ENCODE measurements at regions of chrX and their contacts with region 1.

Region 1: DNA sequence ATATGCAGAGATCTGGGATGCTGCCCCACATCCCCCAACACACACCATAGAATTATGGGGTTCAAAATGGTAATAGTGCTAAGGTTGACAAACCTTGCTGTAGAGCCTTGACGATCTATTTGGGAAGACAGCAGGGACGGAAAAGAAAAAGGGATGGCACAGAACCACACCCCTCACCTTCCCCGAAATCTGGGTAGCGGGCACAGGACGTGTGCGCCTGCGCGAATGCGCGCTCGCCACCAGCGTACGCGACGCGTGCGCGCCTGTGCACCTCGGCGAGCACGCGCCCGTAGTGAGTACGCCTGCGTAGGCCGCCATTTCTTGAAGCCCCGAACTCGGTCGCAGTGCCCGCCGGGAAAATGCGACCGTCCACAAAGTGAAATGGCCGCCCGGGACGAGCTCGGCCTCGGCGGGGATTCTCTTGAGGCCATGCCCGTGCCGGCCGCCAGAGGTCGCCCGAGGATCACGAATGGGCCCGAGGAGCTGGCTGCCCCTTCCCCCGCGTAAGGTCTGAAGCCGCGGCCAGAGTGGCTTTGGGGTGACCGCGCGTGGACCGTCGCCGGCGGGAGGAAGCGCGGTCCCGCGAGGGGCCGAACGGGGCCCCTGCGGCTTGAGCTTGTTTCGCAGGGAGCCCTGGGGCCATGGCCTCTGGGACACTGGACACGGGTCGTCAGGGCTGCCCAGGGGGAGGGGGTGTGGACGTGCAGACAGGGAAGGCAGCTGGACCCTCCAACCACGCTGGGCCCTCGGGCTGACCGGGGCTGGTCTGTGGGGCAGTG is 43.6 kb downstream of the ZNF185 start:
- DNase-seq: peak; percentile 84
- ATAC-seq: peak; percentile 96
- H3K4me3 Mint-ChIP-seq: peak overlapping the region; percentile 87
- H3K27ac Mint-ChIP-seq: peak overlapping the region; percentile 83
- H3K4me1 Mint-ChIP-seq: peaks cover 9% of the 10 kb centered on the region
- H3K27me3 Mint-ChIP-seq: no peaks in the 10 kb centered on the region
- CTCF ChIP-seq: no peak

Region 2: GRCh38 chrX:151722241-151722846 is 1219.2 kb before region 1 on chrX:
- CTCF ChIA-PET with region 1: no interaction called
- POLR2A ChIA-PET with region 1: no interaction called
- intact Hi-C with region 1: no loop called
- DNase-seq: no peak
- ATAC-seq: no peak
- H3K4me3 Mint-ChIP-seq: no peak overlapping the region
- H3K27ac Mint-ChIP-seq: no peak overlapping the region
- H3K4me1 Mint-ChIP-seq: no peaks in the 10 kb centered on the region
- H3K27me3 Mint-ChIP-seq: no peaks in the 10 kb centered on the region
- CTCF ChIP-seq: no peak

Region 3: DNA sequence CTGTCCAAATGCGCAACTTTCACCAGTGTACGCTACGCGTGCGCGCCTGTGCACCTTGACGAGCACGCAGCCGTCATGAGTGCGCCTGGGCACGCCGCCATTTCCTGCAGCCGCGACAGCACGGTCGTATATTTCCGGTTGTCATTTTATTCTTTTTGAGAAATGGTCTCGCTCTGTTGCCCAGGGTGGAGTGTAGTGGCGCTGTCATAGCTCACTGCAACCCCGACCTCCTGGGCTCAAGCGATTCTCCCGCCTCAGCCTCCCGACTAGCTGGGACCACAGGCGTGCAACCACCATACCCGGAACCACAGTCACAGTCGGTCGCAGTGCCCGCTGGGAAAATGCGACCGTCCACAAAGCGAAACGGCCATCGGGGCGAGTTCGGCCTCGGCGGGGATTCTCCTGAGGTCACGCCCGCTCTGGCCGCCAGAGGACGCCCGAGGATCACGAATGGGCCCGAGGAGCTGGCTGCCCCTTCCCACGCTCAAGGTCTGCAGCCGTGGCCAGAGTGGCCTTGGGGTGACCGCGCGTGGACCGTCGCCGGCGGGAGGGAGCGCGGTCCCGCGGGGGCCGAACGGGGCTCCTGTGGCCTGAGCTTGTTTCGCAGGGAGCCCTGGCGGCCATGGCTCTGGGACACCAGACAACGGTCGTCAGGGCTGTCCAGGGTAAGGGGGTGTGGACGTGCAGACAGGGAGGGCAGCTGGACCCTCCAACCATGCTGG is 91.0 kb after region 1 on chrX:
- CTCF ChIA-PET with region 1: interaction called, 8 read pairs
- POLR2A ChIA-PET with region 1: interaction called, 3 read pairs
- intact Hi-C with region 1: loop called (anchors 5 kb)
- DNase-seq: peak; percentile 70
- ATAC-seq: peak; percentile 87
- H3K4me3 Mint-ChIP-seq: peak overlapping the region; percentile 89
- H3K27ac Mint-ChIP-seq: peak overlapping the region; percentile 92
- H3K4me1 Mint-ChIP-seq: peaks cover 2% of the 10 kb centered on the region
- H3K27me3 Mint-ChIP-seq: no peaks in the 10 kb centered on the region
- CTCF ChIP-seq: no peak

Region 4: GRCh38 chrX:153361781-153362397 is 420.4 kb after region 1 on chrX:
- CTCF ChIA-PET with region 1: no interaction called
- POLR2A ChIA-PET with region 1: no interaction called
- intact Hi-C with region 1: no loop called
- DNase-seq: no peak
- ATAC-seq: no peak
- H3K4me3 Mint-ChIP-seq: no peak overlapping the region
- H3K27ac Mint-ChIP-seq: no peak overlapping the region
- H3K4me1 Mint-ChIP-seq: no peaks in the 10 kb centered on the region
- H3K27me3 Mint-ChIP-seq: no peaks in the 10 kb centered on the region
- CTCF ChIP-seq: no peak

Region 5: DNA sequence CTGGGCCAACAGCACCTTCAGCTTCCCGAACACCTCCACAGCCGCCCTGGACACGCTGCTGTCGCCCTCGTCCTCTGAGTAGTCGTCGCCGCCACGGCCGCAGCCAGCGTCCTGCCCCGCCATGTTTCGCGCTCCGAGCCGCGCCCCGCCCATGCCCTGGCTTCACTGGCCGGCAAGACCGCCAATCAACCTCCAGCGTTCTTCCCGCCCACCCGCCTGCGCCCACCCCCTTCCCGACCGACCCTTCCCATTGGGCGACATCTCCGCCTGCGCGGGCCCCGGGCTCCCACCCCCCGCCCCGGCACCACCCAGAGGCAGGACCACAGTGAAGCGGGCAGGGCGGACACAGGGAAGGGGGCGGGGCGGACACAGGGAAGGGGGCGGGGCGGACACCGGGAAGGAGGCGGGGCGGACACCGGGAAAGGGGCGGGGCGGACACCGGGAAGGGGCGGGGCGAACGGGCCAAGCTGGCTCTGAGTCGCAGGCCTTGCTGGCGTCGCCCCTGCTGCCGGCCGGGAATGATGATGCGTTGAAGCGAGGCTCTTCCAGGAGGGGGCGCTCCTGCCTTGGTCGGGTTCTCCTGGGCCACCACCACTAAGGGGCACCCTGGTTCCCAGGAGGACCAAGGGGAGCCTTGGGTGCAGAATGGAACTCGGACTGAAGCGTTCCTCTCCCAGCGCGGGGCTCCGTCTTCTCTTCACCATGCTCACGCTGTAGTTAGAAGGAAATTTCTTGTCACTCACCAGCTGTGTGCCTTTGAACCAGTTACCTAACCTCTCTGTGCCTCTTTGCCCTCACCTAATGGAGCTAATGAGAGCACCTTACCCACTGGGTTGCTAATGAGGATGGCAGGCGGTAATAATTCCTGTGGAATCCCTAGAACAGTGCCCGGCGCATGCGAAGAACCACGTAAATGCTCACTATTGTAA is 529.2 kb after region 1 on chrX and contains the start of gene HAUS7:
- CTCF ChIA-PET with region 1: no interaction called
- POLR2A ChIA-PET with region 1: no interaction called
- intact Hi-C with region 1: loop called (anchors 1 kb)
- DNase-seq: peak; percentile 69
- ATAC-seq: peak; percentile 88
- H3K4me3 Mint-ChIP-seq: peak within 1 kb of the TSS; percentile 83
- H3K27ac Mint-ChIP-seq: peak within 1 kb of the TSS; percentile 66
- H3K4me1 Mint-ChIP-seq: peaks cover 16% of the 10 kb centered on the region
- H3K27me3 Mint-ChIP-seq: no peaks in the 10 kb centered on the region
- CTCF ChIP-seq: no peak
- total RNA-seq, gene HAUS7: 39.2 and 42.7 TPM in 2 replicates

Region 6: GRCh38 chrX:153539171-153539978 is 597.9 kb after region 1 on chrX:
- CTCF ChIA-PET with region 1: interaction called, 15 read pairs
- POLR2A ChIA-PET with region 1: no interaction called
- intact Hi-C with region 1: no loop called
- DNase-seq: peak; percentile 42
- ATAC-seq: peak; percentile 94
- H3K4me3 Mint-ChIP-seq: no peak overlapping the region
- H3K27ac Mint-ChIP-seq: no peak overlapping the region
- H3K4me1 Mint-ChIP-seq: no peaks in the 10 kb centered on the region
- H3K27me3 Mint-ChIP-seq: peaks cover 3% of the 10 kb centered on the region
- CTCF ChIP-seq: no peak

Region 7: DNA sequence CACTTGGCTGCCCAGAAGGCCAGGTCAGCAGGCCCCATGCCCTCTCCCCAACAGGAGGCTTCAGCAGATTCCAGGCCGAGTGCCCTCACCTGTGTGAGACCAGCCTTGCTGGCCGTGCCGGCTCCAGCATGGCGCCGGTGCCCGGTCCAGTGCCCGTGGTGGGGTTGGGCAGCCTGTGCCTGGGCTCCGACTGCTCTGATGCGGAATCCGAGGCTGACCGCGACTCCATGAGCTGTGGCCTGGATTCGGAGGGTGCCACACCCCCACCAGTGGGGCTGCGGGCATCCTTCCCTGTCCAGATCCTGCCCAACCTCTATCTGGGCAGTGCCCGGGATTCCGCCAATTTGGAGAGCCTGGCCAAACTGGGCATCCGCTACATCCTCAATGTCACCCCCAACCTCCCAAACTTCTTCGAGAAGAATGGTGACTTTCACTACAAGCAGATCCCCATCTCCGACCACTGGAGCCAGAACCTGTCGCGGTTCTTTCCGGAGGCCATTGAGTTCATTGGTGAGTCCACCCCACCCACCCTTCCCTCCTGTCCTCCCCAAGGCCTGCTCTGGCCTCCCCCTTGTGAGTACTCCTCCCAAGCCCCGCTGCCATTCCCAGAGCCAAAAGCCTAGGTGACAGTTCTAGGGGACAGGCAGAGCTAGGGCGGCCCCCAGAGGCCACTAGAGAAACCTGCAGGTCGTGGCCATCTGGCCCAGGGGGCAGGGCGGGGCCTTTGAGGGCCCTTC is 707.8 kb after region 1 on chrX:
- CTCF ChIA-PET with region 1: no interaction called
- POLR2A ChIA-PET with region 1: no interaction called
- intact Hi-C with region 1: loop called (anchors 5 kb)
- DNase-seq: no peak
- ATAC-seq: peak; percentile 80
- H3K4me3 Mint-ChIP-seq: no peak overlapping the region
- H3K27ac Mint-ChIP-seq: no peak overlapping the region
- H3K4me1 Mint-ChIP-seq: no peaks in the 10 kb centered on the region
- H3K27me3 Mint-ChIP-seq: peaks cover 1% of the 10 kb centered on the region
- CTCF ChIP-seq: no peak

Region 8: GRCh38 chrX:153667956-153668396 is 726.5 kb after region 1 on chrX:
- CTCF ChIA-PET with region 1: interaction called, 7 read pairs
- POLR2A ChIA-PET with region 1: no interaction called
- intact Hi-C with region 1: loop called (anchors 1 kb)
- DNase-seq: peak; percentile 66
- ATAC-seq: peak; percentile 90
- H3K4me3 Mint-ChIP-seq: peak overlapping the region; percentile 68
- H3K27ac Mint-ChIP-seq: no peak overlapping the region
- H3K4me1 Mint-ChIP-seq: peaks cover 5% of the 10 kb centered on the region
- H3K27me3 Mint-ChIP-seq: peaks cover 7% of the 10 kb centered on the region
- CTCF ChIP-seq: no peak

Region 9: DNA sequence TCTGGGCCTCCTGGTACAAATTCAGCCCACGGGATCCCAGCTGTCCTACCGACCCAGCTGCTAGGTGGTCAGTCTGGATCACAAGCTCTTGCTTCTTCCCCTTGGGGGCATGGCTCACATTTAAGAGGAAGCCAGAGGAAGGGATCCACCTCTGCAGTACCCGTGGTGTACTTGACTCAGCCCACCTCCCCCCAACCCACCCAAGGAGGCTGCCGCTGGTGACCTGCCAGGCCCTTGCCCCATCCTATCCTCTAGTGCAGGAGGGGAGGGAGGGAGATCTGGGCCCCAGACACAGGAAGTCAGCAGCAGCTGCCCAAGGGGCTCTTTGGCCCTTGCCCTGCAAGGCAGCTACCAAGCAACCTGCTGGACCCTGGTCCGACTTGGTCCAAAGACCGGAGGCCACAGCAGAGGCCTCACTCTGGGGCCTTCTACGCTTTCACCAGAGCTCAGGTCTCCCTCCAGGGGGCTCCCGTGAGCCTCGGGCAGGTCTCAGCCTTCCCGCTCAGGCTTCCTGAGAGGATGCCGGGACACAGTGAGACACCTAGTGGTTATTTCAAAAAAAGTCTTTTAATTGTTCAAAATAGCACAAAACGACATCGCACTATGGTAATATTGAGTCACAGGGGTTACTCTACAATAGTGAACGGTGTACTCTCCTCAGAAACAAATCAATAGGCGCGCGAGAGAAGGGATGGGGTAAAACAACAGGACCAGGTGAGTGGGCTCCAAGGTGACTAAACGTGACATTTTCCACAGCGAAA is 1005.7 kb after region 1 on chrX:
- CTCF ChIA-PET with region 1: no interaction called
- POLR2A ChIA-PET with region 1: no interaction called
- intact Hi-C with region 1: loop called (anchors 5 kb)
- DNase-seq: peak; percentile 63
- ATAC-seq: peak; percentile 86
- H3K4me3 Mint-ChIP-seq: no peak overlapping the region
- H3K27ac Mint-ChIP-seq: peak overlapping the region; percentile 63
- H3K4me1 Mint-ChIP-seq: peaks cover 17% of the 10 kb centered on the region
- H3K27me3 Mint-ChIP-seq: no peaks in the 10 kb centered on the region
- CTCF ChIP-seq: no peak